ENCODE measurements at regions of chr5 and their contacts with region 1.

Region 1: GRCh38 chr5:90020575-90021539 is 388.7 kb downstream of the CETN3 start:
- DNase-seq: peak; percentile 98
- ATAC-seq: peak; percentile 97
- H3K4me3 ChIP-seq: peak overlapping the region; percentile 55
- H3K27ac ChIP-seq: peak overlapping the region; percentile 97
- H3K4me1 ChIP-seq: peaks cover 24% of the 10 kb centered on the region
- H3K27me3 ChIP-seq: no peaks in the 10 kb centered on the region
- CTCF ChIP-seq: no peak

Region 2: DNA sequence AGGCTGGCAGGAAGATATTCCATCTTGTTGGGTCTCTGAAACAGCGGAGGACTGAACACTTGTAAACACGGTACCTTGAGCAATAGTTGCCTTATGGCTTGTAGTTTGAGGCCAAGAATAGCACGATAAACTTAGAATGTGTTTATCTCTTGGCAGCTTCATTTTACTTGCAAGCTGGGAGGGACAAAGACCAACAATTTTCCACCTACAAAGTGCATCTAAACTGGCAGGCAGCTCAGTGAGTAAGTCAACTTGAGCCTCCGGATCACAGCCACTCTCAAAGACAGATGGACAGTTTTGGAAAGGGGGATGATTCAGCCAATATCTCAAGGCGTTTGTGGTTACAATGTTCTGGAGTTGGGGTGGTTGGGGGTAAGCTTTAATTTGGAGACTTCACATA is 263.9 kb before region 1 on chr5:
- CTCF ChIA-PET with region 1: no interaction called
- POLR2A ChIA-PET with region 1: no interaction called
- intact Hi-C with region 1: loop called (anchors 2 kb)
- DNase-seq: no peak
- ATAC-seq: no peak
- H3K4me3 ChIP-seq: no peak overlapping the region
- H3K27ac ChIP-seq: no peak overlapping the region
- H3K4me1 ChIP-seq: peaks cover 14% of the 10 kb centered on the region
- H3K27me3 ChIP-seq: no peaks in the 10 kb centered on the region
- CTCF ChIP-seq: no peak

Region 3: DNA sequence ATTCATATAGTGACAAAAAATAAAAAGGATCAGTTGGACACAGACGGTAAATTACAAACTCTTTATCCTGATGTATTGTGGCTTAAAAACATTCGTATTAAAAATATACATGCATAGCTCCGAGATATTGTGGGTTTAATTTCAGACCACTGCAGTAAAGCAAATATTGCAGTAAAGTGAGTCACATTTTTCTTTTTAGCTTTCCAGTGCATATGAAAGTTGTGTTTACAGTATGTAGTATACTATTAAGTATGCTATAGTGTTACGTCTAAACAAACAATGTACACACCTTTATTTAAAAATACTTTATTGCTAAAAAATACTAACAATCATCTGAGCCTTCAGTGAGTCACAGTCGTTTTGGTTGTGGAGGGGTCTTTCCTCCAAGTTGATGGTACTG is 163.1 kb before region 1 on chr5:
- CTCF ChIA-PET with region 1: no interaction called
- POLR2A ChIA-PET with region 1: no interaction called
- intact Hi-C with region 1: loop called (anchors 1 kb)
- DNase-seq: peak; percentile 93
- ATAC-seq: peak; percentile 99
- H3K4me3 ChIP-seq: peak overlapping the region; percentile 6; the same call in 1 of the 2 replicates
- H3K27ac ChIP-seq: peak overlapping the region; percentile 51
- H3K4me1 ChIP-seq: peaks cover 14% of the 10 kb centered on the region
- H3K27me3 ChIP-seq: no peaks in the 10 kb centered on the region
- CTCF ChIP-seq: no peak

Region 4: GRCh38 chr5:89930591-89931392 is 90.1 kb before region 1 on chr5:
- CTCF ChIA-PET with region 1: no interaction called
- POLR2A ChIA-PET with region 1: interaction called, 5 read pairs
- intact Hi-C with region 1: loop called (anchors 2 kb)
- DNase-seq: peak; percentile 96
- ATAC-seq: peak; percentile 94
- H3K4me3 ChIP-seq: peak overlapping the region; percentile 10; the same call in 1 of the 2 replicates
- H3K27ac ChIP-seq: peak overlapping the region; percentile 52
- H3K4me1 ChIP-seq: peaks cover 21% of the 10 kb centered on the region
- H3K27me3 ChIP-seq: no peaks in the 10 kb centered on the region
- CTCF ChIP-seq: no peak

Region 5: DNA sequence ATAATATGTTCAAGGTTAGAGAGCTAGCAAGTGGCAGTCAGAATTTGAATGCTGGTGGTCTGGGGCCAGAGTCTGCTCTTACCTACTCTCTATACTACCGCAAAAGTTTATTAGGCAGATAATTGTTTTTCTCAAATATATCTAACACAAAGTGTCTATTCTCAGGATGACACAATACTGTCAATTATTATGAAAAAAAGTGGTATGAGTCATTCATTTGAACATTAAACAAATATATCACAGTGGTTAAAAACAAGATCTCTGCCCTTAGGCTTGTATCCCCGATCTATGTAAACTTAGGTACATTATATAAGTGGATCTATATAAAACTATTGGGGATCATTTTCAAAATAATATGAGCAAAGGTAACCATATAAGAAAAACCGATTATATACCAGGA is 33.8 kb after region 1 on chr5:
- CTCF ChIA-PET with region 1: no interaction called
- POLR2A ChIA-PET with region 1: interaction called, 7 read pairs
- intact Hi-C with region 1: loop called (anchors 1 kb)
- DNase-seq: peak; percentile 84
- ATAC-seq: peak; percentile 53
- H3K4me3 ChIP-seq: no peak overlapping the region
- H3K27ac ChIP-seq: peak overlapping the region; percentile 65; the same call in 1 of the 2 replicates
- H3K4me1 ChIP-seq: peaks cover 30% of the 10 kb centered on the region
- H3K27me3 ChIP-seq: no peaks in the 10 kb centered on the region
- CTCF ChIP-seq: no peak

Region 6: GRCh38 chr5:90096415-90097081 is 75.7 kb after region 1 on chr5:
- CTCF ChIA-PET with region 1: no interaction called
- POLR2A ChIA-PET with region 1: no interaction called
- intact Hi-C with region 1: loop called (anchors 10 kb)
- DNase-seq: peak; percentile 91
- ATAC-seq: peak; percentile 98
- H3K4me3 ChIP-seq: peak overlapping the region; percentile 34; the same call in 1 of the 2 replicates
- H3K27ac ChIP-seq: peak overlapping the region; percentile 45
- H3K4me1 ChIP-seq: peaks cover 26% of the 10 kb centered on the region
- H3K27me3 ChIP-seq: no peaks in the 10 kb centered on the region
- CTCF ChIP-seq: no peak

Region 7: GRCh38 chr5:90184764-90185163 is 163.9 kb after region 1 on chr5:
- CTCF ChIA-PET with region 1: no interaction called
- POLR2A ChIA-PET with region 1: no interaction called
- intact Hi-C with region 1: loop called (anchors 5 kb)
- DNase-seq: no peak
- ATAC-seq: no peak
- H3K4me3 ChIP-seq: no peak overlapping the region
- H3K27ac ChIP-seq: no peak overlapping the region
- H3K4me1 ChIP-seq: peaks cover 15% of the 10 kb centered on the region
- H3K27me3 ChIP-seq: no peaks in the 10 kb centered on the region
- CTCF ChIP-seq: no peak

Measured in PC-3 (cell line).